AG04449 (cell line): ENCODE measurements at regions of chr9 and their contacts with region 1.

Region 1: DNA sequence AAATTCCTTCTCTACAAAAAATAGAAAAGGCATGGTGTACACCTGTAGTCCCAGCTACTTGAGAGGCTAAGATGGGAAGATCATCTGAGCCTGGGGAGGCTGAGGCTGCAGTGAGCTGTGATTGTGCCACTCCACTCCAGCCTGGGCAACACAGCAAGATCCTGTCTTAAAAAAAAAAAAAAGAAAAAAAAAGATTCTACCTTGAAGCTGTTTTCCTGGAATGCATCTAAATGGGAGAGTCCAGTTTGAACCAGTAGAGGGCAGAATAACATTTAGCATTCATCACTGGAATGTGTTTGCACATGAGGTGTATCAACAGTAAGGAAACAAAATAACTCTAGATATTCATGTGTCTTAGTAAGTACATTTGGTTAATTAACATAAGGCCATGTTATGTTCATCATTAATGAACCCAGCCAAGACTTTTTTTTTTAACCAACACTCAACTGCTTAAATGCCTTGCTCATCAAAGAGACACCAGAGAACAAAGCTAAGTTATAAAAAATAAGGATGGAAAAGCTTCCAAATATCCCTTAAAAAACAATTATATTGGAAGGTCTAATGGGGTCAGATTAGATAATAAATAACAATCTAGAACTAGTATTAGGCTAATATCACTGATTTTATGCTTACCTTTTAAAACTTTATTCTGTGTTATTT is 16.1 kb downstream of the IFNE start:
- DNase-seq: no peak
- H3K4me3 ChIP-seq: no peak overlapping the region
- CTCF ChIP-seq: peak; percentile 51

Region 2: GRCh38 chr9:21317956-21318923 is 147.7 kb before region 1 on chr9:
- CTCF ChIA-PET with region 1: interaction called, 15 read pairs
- POLR2A ChIA-PET with region 1: no interaction called
- DNase-seq: no peak
- H3K4me3 ChIP-seq: no peak overlapping the region
- CTCF ChIP-seq: peak; percentile 71

Region 3: DNA sequence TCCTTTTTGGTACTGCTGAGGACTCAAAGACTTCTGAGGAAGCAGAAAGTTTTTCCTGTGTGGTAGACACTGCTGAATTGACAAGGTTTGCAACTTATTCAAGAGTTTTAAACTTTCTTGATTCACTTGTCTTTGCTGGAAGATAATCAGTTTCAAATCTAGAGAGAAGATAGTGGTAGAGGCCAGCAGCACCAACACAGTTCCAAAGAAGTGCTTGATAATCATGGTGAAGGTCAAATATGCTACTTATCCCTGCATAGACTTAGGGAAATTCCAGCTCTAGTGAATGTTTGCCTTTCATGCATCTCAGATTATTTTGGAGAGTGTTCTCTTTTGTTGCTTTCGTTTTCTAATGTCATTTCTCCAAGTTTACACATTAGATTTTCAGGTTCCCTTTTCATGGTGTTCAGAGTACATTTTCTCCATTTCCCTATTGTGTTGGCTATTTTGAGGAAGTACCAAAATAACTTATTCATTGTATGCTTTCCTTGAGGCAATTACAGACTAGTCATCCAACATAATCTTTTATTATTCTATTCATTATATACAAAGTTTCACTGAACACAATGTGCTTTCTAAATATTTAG is 15.6 kb after region 1 on chr9:
- CTCF ChIA-PET with region 1: interaction called, 22 read pairs
- POLR2A ChIA-PET with region 1: no interaction called
- DNase-seq: no peak
- H3K4me3 ChIP-seq: no peak overlapping the region
- CTCF ChIP-seq: no peak